ENCODE measurements at regions of chr4 and their contacts with region 1.

Region 1: DNA sequence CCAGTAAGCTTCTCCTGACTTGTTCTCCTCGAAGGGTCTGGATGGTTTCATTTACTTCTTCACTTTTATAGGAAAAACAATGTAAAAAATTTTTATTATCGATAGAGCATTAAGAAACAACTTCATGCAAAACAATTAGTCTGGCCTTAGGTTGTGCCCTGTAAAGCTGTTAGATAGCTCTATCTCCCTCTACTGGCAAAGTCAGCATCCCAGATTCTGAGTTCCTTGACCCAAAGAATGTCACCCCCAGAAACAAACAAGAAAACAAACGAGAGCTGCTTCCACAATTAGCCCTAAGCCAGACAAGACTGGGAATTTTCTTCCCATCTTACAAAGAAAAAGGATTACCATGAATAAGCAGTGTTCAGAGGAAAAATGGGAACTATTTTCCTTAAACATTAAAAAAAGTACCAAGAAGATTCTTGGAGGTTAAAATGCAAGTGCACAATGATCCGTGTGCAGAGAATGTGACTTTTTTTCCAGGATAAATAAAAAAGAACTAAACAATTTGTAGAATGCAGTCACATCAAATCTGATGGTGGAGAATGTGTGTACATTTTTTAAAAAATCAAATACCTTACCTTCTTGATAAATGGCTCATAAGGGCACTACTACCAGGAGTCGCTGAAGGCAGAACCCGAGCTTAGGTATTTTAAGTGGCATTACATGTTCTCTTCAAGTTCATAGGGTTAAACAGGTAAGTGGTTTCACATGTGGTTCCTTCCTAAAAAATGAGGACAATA is 293.2 kb downstream of the FBXO8 start:
- DNase-seq: no peak
- ATAC-seq: peak; percentile 92

Region 2: GRCh38 chr4:173766171-173766600 is 224.1 kb before region 1 on chr4:
- intact Hi-C with region 1: loop called (anchors 10 kb)
- DNase-seq: no peak
- ATAC-seq: no peak

Region 3: DNA sequence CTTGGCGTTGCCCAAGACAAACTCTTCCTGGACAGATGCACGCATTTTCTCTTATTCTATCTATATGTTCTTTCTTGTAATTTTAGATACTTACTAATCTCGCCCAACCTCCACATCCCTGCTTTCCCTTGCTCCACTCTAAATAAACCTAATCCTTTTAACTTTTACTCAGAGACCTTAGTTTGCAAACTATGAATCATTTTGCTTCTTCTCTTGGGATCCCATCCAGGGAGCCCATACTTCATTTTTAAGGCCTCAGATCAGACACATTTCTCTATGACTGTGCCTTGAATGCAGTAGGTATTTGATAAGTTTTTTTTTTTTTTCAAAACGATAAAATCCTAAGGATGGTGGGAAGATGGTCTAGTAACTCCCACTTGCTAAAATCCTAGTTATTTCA is 106.5 kb before region 1 on chr4:
- intact Hi-C with region 1: no loop called
- DNase-seq: no peak
- ATAC-seq: no peak